HCT116 (cell line): ENCODE measurements at regions of chr20 and their contacts with region 1.

Region 1: DNA sequence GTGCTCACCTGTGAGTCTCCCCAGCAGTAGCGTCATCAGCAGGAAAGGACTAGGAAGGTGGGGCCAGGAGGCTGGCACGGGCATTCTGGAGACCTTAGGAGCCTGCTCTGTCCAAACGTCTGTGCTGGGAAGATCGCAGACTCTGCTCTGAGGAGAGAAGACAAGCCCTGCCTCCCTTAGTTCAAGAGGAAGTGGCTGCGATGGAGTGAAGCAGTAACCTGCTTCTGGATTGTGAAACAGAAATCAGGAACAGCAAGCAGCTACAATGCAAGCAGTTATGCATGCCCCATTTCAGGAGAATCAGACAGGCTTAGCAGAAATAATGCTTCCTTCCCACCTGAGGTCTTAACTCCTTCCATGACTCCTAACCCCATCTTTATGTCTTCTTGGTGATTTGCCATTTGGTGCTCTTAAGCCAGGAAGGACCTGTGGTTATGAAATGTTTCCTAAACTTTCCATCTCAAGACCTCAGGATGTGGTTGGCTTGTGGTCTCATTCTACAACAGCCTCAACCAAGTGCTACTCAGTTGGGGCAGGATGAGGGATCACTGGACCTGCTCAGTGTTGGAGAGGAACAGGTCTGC is at the start of gene SIRPB1:
- DNase-seq: no peak
- ATAC-seq: no peak
- H3K4me3 ChIP-seq: no peak within 1 kb of the TSS
- H3K27ac ChIP-seq: no peak within 1 kb of the TSS
- H3K4me1 ChIP-seq: no peaks in the 10 kb centered on the region
- H3K27me3 ChIP-seq: no peaks in the 10 kb centered on the region
- CTCF ChIP-seq: no peak
- POLR2A ChIP-seq: no peak
- RAD21 ChIP-seq: no peak
- total RNA-seq, gene SIRPB1: 1.9 TPM

Region 2: GRCh38 chr20:1567392-1568162 is 52.4 kb before region 1 on chr20:
- CTCF ChIA-PET with region 1: no interaction called
- POLR2A ChIA-PET with region 1: no interaction called
- RAD21 ChIA-PET with region 1: no interaction called
- intact Hi-C with region 1: loop called (anchors 1 kb)
- DNase-seq: peak; percentile 8
- ATAC-seq: peak; percentile 55
- H3K4me3 ChIP-seq: peak overlapping the region in 1 of 2 experiments; percentile 23; a peak in 1 of 4 replicates
- H3K27ac ChIP-seq: no peak overlapping the region
- H3K4me1 ChIP-seq: peaks cover 6 to 38% of the 10 kb centered on the region in 2 experiments; a peak in 3 of 4 replicates
- H3K27me3 ChIP-seq: no peaks in the 10 kb centered on the region
- CTCF ChIP-seq: no peak
- POLR2A ChIP-seq: no peak
- RAD21 ChIP-seq: no peak

Region 3: DNA sequence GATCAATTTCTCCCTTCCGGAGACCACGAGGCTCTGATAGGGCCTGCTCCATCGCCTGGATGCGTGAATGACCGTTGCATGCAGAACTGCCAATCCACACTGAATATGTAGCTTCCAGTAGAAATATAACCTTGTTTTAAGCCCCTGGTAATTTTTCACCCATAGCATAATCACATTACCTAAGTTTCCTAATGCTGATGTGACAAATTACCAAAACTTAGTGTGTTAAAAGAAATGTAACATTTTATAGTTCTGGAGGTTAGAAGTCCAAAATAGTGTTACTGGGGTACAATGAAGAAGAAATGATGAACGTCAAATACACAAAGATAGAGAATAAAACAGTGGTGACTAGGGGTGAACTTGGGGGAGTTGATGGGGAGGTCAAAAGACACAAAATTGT is 40.5 kb before region 1 on chr20:
- CTCF ChIA-PET with region 1: no interaction called
- POLR2A ChIA-PET with region 1: no interaction called
- RAD21 ChIA-PET with region 1: no interaction called
- intact Hi-C with region 1: loop called (anchors 1 kb)
- DNase-seq: no peak
- ATAC-seq: no peak
- H3K4me3 ChIP-seq: no peak overlapping the region
- H3K27ac ChIP-seq: no peak overlapping the region
- H3K4me1 ChIP-seq: no peaks in the 10 kb centered on the region
- H3K27me3 ChIP-seq: no peaks in the 10 kb centered on the region
- CTCF ChIP-seq: no peak
- POLR2A ChIP-seq: no peak
- RAD21 ChIP-seq: no peak